Heart left ventricle (tissue), 16 donors: ENCODE measurements at regions of chrX and their contacts with region 1.

Region 1: GRCh38 chrX:31036895-31037294 is 34.9 kb downstream of the FTHL17 start:
- DNase-seq: peak in 4 of 5 donors; percentile 19 to 50 (median 36)
- ATAC-seq: peak in 2 of 4 donors; percentile 69 to 85
- H3K4me3 ChIP-seq: no peak overlapping the region
- H3K27ac ChIP-seq: no peak overlapping the region
- H3K4me1 ChIP-seq: no peaks in the 10 kb centered on the region
- H3K27me3 ChIP-seq: peaks cover 0 to 3% (median 0%) of the 10 kb centered on the region in 9 donors
- CTCF ChIP-seq: peak; percentile 30 to 68 (median 51)
- POLR2A ChIP-seq: no peak

Region 2: GRCh38 chrX:31293409-31293808 is 256.5 kb after region 1 on chrX:
- intact Hi-C with region 1: loop called in 2 of 10 experiments (anchors 5 kb)
- DNase-seq: no peak
- ATAC-seq: no peak
- H3K4me3 ChIP-seq: no peak overlapping the region
- H3K27ac ChIP-seq: no peak overlapping the region
- H3K4me1 ChIP-seq: no peaks in the 10 kb centered on the region
- H3K27me3 ChIP-seq: no peaks in the 10 kb centered on the region
- CTCF ChIP-seq: peak in 2 of 12 donors; percentile 10 to 15
- POLR2A ChIP-seq: no peak